OCI-LY7 (cell line): ENCODE measurements at regions of chr10 and their contacts with region 1.

Region 1: GRCh38 chr10:23994479-23995046 is 214.4 kb upstream of the KIAA1217 start:
- DNase-seq: peak; percentile 34
- H3K4me3 ChIP-seq: no peak overlapping the region
- H3K27ac ChIP-seq: no peak overlapping the region
- H3K4me1 ChIP-seq: no peaks in the 10 kb centered on the region
- CTCF ChIP-seq: peak; percentile 87

Region 2: DNA sequence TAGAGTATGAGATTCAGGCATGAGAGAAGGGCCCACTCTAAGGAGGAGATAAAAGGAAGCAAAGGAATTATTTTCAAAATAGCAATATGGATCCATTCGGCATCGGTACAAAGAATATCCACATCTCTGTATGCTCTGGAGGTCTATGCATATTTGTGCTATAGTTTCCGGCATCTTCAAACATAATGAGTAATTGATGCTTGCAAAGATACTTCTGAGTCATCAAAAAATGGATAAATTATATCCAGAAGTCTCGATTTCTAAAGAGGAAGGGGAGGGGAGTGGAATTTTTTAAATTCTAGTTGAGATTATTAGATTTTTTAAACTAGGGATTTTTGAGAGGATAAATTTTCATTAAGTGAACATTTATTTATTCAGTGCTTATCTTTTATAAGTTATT is 141.5 kb after region 1 on chr10:
- CTCF ChIA-PET with region 1: no interaction called
- POLR2A ChIA-PET with region 1: no interaction called
- intact Hi-C with region 1: no loop called
- DNase-seq: no peak
- H3K4me3 ChIP-seq: no peak overlapping the region
- H3K27ac ChIP-seq: no peak overlapping the region
- H3K4me1 ChIP-seq: no peaks in the 10 kb centered on the region
- CTCF ChIP-seq: no peak

Region 3: GRCh38 chr10:24197263-24197662 is 202.7 kb after region 1 on chr10:
- CTCF ChIA-PET with region 1: no interaction called
- POLR2A ChIA-PET with region 1: no interaction called
- intact Hi-C with region 1: loop called (anchors 2 kb)
- DNase-seq: no peak
- H3K4me3 ChIP-seq: no peak overlapping the region
- H3K27ac ChIP-seq: no peak overlapping the region
- H3K4me1 ChIP-seq: no peaks in the 10 kb centered on the region
- CTCF ChIP-seq: no peak

Region 4: GRCh38 chr10:24503461-24504320 is 509.1 kb after region 1 on chr10:
- CTCF ChIA-PET with region 1: no interaction called
- POLR2A ChIA-PET with region 1: no interaction called
- intact Hi-C with region 1: loop called (anchors 10 kb)
- DNase-seq: peak; percentile 26
- H3K4me3 ChIP-seq: no peak overlapping the region
- H3K27ac ChIP-seq: no peak overlapping the region
- H3K4me1 ChIP-seq: no peaks in the 10 kb centered on the region
- CTCF ChIP-seq: peak; percentile 80

Region 5: DNA sequence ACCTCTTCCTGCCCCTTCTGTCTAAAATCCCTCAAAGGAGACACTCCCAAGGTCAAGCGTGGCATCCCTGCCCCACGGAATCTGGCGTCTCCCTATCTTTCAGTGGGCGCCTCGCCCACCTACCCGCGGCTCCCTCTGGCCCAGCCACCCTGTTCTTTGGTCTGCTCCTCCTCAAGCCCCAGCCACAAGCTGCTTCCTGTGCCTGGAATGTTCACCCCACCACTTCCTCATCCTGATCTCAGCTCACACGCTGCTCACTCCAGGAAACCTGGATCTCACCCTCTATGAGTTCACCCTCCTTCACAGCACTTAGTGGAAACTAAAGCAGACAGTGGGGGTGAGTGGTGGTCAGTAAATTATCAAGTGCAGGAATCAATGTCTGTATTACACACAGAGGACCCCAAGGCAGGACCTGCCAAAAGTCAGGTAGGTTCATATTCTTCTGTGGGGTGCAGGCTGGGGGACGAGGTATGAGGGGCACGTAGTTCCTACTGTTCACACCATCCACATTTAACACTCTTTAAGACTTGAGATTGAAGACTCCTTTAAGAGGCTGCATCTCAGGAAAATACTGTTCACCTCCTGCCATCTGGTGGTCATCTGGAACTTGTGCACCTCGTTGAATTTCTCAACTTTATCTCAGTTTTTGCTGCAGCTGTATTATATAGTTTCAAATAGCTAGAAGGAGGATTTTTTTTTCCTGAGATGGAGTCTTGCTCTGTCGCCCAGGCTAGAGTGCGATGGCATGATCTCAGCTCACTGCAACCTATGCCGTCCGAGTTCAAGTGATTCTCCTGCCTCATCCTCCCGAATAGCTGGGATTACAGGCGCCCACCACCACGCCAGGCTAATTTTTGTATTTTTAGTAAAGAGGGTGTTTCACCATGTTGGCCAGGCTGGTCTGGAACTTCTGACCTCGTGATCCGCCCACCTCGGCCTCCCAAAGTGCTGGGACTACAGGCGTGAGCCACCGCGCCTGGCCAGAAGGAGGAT is 562.5 kb after region 1 on chr10:
- CTCF ChIA-PET with region 1: no interaction called
- POLR2A ChIA-PET with region 1: no interaction called
- intact Hi-C with region 1: loop called (anchors 2 kb)
- DNase-seq: peak; percentile 65
- H3K4me3 ChIP-seq: no peak overlapping the region
- H3K27ac ChIP-seq: no peak overlapping the region
- H3K4me1 ChIP-seq: no peaks in the 10 kb centered on the region
- CTCF ChIP-seq: peak; percentile 78